ENCODE measurements at regions of chr11 and their contacts with region 1.

Region 1: DNA sequence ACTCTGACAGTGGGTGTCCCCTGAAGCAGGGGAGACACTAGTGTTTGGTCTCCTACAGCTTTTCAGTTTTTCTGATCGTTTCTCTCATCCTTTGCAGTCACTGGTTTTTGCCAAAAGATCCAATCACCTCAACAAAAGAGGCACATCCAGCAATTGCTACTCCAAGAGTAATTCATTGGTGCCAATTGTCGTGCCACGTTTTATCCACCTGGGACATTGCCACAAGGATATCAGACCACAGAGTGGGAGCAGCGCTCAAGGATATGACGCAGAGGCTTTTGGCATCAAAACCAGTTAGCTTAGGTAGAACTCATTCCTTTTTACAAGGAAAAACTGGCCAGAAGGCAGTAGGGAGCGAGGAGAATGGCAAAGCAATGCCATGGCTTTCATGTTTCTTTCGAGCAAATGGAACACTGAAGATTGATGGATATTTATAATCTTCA is 40.9 kb upstream of the BLID start:
- DNase-seq: peak in 1 of 2 donors; percentile 31
- ATAC-seq: peak; percentile 55 to 78 (median 72)
- H3K4me3 ChIP-seq: peak overlapping the region; percentile 73
- H3K27ac ChIP-seq: peak overlapping the region; percentile 78
- H3K4me1 ChIP-seq: peaks cover 10% of the 10 kb centered on the region
- H3K27me3 ChIP-seq: no peaks in the 10 kb centered on the region
- CTCF ChIP-seq: no peak

Region 2: GRCh38 chr11:122095681-122096262 is 61.2 kb before region 1 on chr11:
- intact Hi-C with region 1: loop called in 1 of 2 experiments (anchors 1 kb)
- DNase-seq: no peak
- ATAC-seq: no peak
- H3K4me3 ChIP-seq: peak overlapping the region; percentile 76
- H3K27ac ChIP-seq: peak overlapping the region; percentile 90
- H3K4me1 ChIP-seq: peaks cover 18% of the 10 kb centered on the region
- H3K27me3 ChIP-seq: peaks cover 0 to 6% (median 0%) of the 10 kb centered on the region in 3 donors
- CTCF ChIP-seq: no peak

Region 3: DNA sequence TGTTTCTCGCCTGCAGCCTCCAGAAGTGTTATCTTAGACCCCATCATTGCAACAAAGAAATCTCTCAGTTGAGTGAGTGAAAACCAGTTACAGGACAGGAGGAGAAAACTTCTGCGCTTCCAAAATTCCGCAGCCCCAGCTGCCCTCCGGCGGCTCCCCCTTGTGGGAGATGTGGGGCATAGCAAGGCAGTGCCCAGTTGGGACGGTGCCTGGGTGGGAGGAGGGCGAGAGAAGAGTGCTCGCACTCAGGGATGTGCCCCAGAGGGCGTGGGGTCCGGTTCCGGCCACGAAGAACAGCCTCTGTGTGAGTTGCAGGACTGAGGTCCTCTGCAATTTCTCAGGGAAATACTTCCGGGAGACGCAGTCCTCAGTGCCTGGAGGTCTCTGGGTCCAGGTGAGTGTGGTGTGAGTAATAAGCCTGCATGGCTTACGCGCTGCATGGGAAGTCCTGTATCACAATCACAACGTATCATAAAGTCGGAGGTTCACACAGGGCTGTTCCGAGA is 46.0 kb after region 1 on chr11:
- intact Hi-C with region 1: no loop called
- DNase-seq: peak; percentile 70 to 83
- ATAC-seq: peak; percentile 92 to 96 (median 94)
- H3K4me3 ChIP-seq: peak overlapping the region; percentile 54
- H3K27ac ChIP-seq: no peak overlapping the region
- H3K4me1 ChIP-seq: peaks cover 15% of the 10 kb centered on the region
- H3K27me3 ChIP-seq: no peaks in the 10 kb centered on the region
- CTCF ChIP-seq: peak; percentile 98

Region 4: GRCh38 chr11:122367809-122368231 is 210.9 kb after region 1 on chr11:
- intact Hi-C with region 1: no loop called
- DNase-seq: no peak
- ATAC-seq: peak in 1 of 4 donors; percentile 48
- H3K4me3 ChIP-seq: no peak overlapping the region
- H3K27ac ChIP-seq: no peak overlapping the region
- H3K4me1 ChIP-seq: peaks cover 15% of the 10 kb centered on the region
- H3K27me3 ChIP-seq: no peaks in the 10 kb centered on the region
- CTCF ChIP-seq: no peak